AG04450 (cell line): ENCODE measurements at regions of chr14 and their contacts with region 1.

Region 1: DNA sequence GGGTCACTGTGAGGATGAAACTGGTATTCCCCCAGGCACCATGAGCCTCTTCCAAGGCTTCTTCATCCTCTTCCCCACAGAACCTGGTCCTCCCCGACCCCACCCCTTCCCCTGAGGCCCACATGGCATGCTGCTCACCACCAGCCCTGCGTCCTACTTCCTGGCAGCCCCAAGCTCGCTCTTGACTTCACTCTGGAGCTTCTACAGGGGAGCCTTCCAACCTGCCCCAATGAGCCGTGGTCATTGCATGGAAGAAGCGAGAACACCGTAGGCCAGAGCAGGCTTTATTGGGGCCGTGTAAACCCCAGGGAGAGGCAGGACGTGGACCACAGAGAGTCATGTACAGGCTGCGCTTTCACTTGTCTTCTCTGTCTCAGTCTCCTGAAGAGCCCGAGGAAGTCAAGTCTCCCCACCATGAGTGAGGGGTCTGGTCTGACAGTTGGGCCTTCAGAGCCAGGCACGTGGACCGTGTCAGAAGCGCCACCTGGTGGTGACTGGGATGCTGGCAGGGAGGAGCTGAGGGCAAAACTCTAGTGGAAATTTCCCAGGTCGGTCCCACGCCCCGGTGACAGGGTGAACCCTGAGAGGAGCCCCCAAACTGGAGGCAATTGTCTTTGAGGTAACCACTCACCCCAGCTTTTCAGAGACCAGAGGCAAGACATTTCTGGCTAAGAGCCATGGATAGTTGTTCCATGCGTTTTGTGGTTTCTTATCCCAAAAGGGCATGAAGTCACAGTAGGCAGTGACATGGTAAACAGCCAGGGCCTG is 17.5 kb downstream of the RPS6KL1 start:
- DNase-seq: no peak
- H3K4me3 ChIP-seq: no peak overlapping the region
- H3K27ac ChIP-seq: no peak overlapping the region
- H3K27me3 ChIP-seq: no peaks in the 10 kb centered on the region
- CTCF ChIP-seq: peak; percentile 96

Region 2: GRCh38 chr14:74867673-74868072 is 37.9 kb before region 1 on chr14:
- CTCF ChIA-PET with region 1: interaction called, 227 read pairs
- POLR2A ChIA-PET with region 1: no interaction called
- DNase-seq: no peak
- H3K4me3 ChIP-seq: no peak overlapping the region
- H3K27ac ChIP-seq: no peak overlapping the region
- H3K27me3 ChIP-seq: peaks cover 6% of the 10 kb centered on the region
- CTCF ChIP-seq: no peak

Region 3: DNA sequence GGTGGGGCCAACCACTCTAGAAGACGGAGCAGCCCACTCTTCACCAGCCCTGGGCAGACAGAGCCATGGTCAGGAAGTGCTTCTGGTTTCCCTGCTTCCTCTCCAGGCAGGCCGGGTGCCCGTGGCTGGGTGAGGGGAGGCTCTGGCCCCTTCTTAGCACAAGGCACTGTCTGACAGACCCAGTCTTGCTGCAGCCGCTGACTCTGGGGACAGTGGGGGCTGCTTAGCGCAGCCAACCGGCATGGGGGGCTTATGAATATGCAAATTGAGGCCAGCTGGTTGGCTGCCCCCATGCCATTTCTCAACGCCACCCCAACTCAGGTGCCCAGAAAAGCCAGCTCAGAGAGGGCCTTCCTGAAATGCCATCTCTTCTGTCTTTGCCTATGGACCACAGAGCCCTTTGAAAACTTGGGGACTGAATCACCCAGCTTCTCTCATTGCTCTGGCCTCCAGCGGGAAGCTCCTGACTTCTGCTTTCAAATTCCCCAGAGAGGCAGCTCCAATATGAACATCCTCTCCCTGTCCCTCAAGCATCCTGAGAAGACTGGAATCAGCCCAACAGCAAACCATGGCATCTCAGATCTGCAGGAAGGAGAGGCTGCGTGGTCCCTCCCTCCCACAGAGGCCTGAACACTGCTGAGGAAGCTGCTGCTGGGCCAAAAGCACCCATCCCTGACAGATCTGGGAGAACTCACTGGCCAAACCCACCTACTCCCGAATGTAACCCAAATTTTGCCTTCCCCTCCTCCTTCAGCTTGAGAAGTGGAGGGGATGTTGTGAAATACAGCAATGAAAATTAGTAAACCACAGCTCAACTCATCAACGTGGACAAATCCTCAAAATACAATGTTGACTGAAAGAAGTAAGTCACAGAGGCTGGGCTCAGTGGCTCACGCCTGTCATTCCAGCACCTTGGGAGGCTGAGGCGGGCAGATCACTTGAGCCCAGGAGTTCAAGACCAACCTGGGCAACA is 29.3 kb before region 1 on chr14 and contains the start of gene PROX2:
- CTCF ChIA-PET with region 1: interaction called, 46 read pairs
- POLR2A ChIA-PET with region 1: interaction called, 3 read pairs
- DNase-seq: no peak
- H3K4me3 ChIP-seq: no peak within 1 kb of the TSS
- H3K27ac ChIP-seq: no peak within 1 kb of the TSS
- H3K27me3 ChIP-seq: no peaks in the 10 kb centered on the region
- CTCF ChIP-seq: no peak
- polyA plus RNA-seq, gene PROX2: not detected in 2 replicates

Region 4: DNA sequence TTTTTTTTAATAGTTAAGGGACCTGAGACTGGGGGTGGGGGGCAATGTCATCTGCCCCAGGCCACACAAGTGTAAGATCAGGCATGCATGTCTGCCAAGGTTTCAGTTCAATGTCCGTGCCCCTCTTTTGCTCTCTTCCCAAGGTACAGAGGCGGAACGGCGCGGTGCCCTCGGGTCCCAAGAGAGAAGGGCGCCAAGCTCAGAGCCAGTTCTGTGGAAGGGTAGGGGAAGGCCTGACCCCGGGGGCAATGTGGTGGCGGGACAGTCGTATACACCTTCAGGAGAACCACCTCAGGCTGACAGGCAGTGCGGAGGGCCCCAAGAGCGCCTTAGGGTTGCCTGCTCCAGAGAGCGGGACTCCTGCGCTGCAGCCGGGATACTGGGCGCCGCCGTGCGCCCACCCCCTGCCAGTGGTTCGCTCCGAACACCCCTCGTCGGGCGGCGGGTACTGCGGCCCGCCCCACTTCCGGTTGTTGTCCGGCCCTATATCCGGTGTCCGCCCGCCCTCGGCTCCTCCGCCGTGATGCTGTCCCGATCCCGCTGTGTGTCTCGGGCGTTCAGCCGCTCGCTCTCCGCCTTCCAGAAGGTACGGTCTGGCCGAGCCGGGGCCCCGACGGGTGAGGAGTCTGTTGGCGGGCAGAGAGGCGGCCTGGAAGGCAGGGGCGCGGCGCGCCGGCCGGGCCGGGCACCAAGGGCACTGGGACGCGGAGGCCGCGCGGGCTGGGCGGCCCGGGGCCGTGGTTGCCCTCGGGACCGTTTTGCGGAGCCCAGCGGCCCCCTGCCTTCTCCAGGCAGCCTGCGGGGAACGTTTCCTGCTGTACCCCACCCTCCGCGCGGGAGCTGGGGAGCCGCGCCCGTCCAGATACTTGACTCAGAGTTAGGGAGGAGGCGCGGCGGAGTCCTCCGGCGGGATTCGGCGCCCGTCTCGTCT is 23.9 kb before region 1 on chr14 and contains the start of gene DLST:
- CTCF ChIA-PET with region 1: interaction called, 46 read pairs
- POLR2A ChIA-PET with region 1: interaction called, 3 read pairs
- DNase-seq: peak; percentile 66
- H3K4me3 ChIP-seq: peak within 1 kb of the TSS; percentile 86
- H3K27ac ChIP-seq: peak within 1 kb of the TSS; percentile 85
- H3K27me3 ChIP-seq: no peaks in the 10 kb centered on the region
- CTCF ChIP-seq: no peak
- polyA plus RNA-seq, gene DLST: 148 and 150 TPM in 2 replicates

Region 5: GRCh38 chr14:74893614-74894091 is 11.9 kb before region 1 on chr14:
- CTCF ChIA-PET with region 1: interaction called, 72 read pairs
- POLR2A ChIA-PET with region 1: interaction called, 5 read pairs
- DNase-seq: no peak
- H3K4me3 ChIP-seq: no peak overlapping the region
- H3K27ac ChIP-seq: no peak overlapping the region
- H3K27me3 ChIP-seq: no peaks in the 10 kb centered on the region
- CTCF ChIP-seq: no peak

Region 6: DNA sequence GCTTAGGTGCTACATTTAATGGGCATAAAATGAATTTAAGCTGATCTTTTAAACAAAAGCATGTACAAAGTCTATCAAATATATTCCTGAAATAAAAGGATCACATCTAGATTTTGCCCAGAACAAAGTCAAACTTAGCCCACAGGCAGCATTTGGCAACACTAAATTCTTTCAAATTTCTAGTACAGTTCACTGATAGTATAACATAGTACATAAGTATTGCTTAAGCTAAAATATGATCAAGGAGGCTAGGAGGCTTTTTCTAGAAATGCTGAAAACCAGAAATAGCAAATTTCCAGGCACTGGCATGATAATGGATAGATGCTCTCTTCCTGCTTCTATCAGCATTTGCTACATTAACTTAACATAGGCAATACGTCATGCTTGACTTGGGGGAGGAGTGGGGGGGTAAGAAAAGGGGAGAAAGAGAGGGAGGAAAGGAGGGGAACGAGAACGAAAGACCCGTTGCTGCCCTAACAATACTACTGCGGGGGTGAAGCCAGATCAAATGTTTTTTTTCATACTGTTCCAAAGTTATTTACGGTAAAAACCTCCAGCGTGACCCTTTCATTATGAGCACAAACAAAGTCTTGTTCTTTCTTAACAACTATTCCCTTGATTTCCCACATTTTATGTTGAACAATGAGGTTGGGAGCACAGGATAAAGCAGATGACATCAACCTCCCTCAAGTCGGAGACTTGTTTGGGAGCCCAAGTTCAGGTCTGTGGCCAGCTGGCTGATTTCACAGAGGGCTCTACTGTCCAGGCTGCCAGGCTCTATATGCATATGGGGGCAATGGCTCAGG is 260.2 kb after region 1 on chr14:
- CTCF ChIA-PET with region 1: no interaction called
- POLR2A ChIA-PET with region 1: no interaction called
- DNase-seq: no peak
- H3K4me3 ChIP-seq: no peak overlapping the region
- H3K27ac ChIP-seq: no peak overlapping the region
- H3K27me3 ChIP-seq: no peaks in the 10 kb centered on the region
- CTCF ChIP-seq: no peak